ENCODE measurements at regions of chr6 and their contacts with region 1.

Region 1: DNA sequence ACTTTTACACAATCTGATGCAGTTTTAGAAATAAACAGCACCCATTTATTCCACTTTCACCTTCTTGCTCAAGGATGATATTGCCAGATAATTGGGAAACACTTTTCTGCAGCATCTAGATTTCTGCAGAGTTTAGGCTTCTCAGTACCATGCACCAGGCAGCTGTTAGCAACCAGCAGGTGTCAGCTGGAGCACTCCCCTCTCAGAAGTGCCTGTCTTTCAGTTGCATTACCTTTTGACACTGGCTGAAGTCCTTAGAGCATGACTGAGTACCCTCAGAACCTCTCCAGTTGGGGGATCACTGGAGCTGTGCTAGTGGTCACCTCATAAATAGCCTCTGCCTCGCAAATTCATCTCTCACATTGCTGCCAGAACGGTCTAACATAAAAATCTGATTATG is 91.2 kb downstream of the DNAH8 start:
- DNase-seq: no peak
- ATAC-seq: no peak

Region 2: GRCh38 chr6:38110481-38110971 is 695.7 kb before region 1 on chr6:
- intact Hi-C with region 1: no loop called
- DNase-seq: peak; percentile 36
- ATAC-seq: peak; percentile 82

Region 3: DNA sequence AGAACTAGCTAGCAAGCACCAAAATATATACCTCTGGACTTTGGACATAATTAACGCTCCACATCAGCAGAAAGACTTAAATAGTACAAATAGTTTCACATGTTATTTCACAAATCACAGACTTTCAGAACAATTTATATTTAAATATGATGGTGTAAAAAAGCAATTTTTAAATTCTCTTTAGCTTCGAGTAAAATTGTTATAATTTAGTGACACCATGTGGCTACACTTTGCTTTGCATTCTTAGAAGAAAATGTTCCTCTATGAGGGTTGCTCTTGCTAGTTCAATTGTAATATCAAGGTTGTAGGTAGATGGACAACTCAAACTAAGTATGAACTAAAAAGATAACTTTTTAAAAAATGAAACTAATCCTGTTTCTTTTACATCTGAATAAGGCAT is 235.5 kb before region 1 on chr6:
- intact Hi-C with region 1: loop called (anchors 5 kb)
- DNase-seq: no peak
- ATAC-seq: no peak

Region 4: DNA sequence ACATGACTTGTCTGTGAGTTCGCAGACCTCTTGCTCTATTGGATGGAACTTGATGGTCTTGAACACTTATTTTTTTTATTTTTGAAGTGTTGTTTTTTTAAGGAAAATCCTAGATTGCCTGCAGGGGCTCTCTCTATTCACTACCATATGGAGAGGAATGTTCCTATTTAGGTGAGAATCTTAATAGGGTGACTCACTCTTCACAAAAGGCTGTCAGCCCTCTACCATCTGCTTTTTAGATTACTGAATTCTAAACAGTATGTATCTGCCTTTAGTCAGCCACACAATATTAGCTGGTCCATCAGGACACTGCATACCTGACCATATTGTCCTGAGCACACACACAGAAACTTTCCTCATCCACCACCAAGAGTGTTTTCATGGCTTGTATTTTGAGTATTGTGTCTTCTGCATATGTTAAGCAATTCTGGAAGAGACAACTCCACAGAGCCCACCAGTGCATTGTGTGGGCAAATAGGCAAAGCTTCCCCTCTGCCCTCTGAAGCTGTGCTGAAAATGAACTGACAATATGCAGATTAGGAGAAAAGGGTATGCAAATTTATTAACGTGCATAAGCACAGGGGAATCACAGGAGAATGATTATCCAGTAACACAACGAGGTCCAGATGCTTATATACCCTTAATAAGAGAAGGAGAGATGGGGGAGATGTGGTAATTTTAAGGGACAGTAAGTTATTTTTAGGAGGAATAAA is 159.9 kb before region 1 on chr6:
- intact Hi-C with region 1: no loop called
- DNase-seq: no peak
- ATAC-seq: no peak

Region 5: DNA sequence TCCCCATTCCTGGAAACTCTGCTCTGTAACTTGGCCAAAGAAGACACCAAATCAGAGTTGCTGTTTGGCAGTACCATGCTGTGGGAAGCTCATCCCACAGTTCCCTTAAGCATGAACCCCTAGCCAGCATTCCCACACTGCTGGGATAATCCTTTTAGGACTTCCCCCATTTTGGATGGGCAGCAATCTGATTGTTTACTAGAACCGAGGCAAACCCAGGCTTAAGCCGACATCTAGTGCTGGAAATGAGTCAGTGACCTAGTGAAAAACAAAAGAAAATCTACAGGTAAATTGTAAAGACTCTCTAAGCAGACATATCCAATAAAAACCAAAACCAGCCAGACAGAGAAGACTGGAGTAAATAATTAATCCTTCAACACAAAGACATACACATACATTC is 86.0 kb before region 1 on chr6:
- intact Hi-C with region 1: no loop called
- DNase-seq: no peak
- ATAC-seq: no peak

Region 6: DNA sequence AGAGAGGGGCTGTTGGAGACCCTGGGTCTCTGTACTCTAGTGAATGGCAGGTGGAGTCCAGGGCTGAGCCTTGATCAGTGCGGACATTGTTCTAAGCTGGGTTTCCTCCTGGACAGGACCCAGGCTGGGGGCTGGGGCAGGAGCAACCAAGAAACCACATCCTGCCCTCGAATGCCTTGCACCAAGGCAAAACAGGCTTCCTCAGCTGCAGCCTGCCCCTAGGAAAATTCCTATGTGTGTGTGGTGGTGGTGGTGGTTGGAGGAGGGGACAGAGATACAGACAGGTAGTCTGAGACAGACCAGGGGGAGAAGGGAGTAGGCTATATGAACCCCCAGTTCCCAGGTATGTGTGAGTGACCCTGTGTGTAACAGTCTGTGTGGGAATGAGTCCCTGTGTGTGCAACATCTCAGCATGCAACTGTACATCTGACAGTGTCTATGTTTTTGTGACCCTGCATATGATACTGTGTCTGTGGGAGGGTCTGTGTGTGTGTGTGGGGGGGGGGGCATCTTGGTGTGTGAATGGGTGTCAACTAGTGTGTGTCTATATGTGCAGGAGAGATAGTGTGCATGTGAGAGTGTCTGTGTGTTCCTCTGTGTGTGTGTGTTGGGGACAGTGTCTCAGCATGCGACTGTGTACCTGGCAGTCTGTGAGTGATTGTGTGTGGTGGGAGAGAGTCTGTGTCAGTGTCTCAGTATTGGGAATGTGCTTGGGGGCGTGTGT is 245.3 kb after region 1 on chr6:
- intact Hi-C with region 1: no loop called
- DNase-seq: no peak
- ATAC-seq: no peak

Measured in left ventricle myocardium superior (tissue), 1 donor.